Right ventricle myocardium superior (tissue), 1 donor: ENCODE measurements at regions of chr7 and their contacts with region 1.

Region 1: DNA sequence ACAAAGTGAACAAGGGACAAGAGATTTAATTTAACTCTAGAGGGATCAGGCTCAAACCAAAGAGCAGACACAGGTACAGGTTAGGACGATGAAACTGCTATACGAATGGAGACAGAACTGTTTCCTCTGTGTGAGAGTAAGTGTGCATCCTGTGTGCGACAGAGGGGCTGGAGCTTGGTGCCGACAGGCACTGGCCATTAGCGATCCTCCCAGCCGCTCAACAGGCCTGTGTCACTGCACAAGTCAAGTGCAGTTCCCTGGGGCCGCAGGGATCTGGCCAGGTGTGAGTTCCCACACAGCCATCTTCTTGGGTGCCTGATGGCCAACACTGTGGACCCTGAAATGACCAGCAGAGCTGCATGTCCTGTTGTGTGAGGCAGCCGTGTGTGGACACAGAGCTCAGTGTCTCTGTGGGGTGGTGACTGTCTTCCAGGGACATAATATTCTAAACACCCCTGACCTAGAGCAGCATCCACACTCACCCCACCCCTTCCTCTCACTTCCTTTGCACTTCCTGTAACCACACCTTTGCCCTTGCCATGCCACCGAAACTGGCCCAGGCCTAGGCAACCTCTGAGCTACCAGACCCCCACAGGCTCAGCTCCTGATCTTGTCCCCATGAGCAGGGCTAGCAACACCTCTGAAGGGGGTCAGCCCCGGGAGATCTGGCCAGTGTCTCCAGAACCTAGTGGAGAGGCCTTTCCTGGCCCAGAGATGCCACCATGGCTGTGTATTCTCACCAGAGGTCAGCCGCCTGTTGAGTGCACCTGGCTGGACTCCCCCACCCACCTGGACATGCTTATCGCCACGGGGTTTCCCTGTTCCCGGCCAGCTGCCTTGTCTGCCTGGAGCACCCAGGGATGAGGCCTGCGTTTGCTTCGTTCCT is 11.7 kb upstream of the TBRG4 start:
- DNase-seq: no peak
- ATAC-seq: no peak

Region 2: DNA sequence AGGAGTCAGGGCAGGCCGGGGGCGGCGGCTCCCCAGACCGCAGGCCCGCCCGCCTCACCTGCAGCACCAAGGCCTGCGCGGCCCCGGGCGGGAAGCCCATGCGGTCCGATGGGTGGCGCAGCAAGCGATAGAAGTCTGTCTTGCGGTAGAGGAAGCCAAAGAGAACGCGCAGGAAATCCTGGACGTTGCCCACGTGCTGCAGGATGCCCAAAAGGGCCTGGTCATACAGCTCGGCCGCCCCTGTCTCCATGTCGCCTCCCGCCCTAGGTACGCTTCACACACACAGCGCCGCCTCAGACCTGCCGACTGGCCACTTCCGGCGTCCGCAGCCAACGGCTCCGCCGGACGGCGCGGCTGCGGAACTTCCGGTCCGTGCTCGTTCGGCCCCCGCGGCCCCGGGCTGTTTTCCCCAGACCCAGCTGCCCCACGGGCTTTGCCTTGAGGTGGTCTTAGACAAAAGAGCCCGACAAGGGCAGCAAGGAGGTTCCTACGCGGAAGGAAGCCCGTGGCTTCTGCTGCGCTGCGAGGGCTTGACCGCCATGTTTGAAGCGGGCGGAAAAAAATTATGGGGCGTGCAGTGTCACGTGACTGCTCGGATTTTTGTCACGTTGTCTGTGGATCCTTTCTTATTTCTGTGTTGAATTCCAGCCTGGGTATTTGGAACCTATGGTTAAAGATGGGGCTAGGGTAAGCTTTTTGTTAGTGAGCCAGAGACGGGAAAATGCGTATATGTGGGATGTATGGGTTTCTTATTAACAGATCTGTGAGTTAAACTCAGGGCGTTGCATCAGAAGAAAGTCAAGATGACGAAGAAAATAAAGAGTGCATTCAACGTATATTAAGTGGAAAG is 632.6 kb before region 1 on chr7 and contains the start of gene NUDCD3:
- intact Hi-C with region 1: no loop called
- DNase-seq: peak; percentile 89
- ATAC-seq: peak; percentile 98
- total RNA-seq, gene NUDCD3: 107 TPM

Region 3: GRCh38 chr7:44967571-44968446 is 155.4 kb before region 1 on chr7:
- intact Hi-C with region 1: loop called (anchors 5 kb)
- DNase-seq: peak; percentile 61
- ATAC-seq: no peak